ENCODE measurements at regions of chr11 and their contacts with region 1.

Region 1: DNA sequence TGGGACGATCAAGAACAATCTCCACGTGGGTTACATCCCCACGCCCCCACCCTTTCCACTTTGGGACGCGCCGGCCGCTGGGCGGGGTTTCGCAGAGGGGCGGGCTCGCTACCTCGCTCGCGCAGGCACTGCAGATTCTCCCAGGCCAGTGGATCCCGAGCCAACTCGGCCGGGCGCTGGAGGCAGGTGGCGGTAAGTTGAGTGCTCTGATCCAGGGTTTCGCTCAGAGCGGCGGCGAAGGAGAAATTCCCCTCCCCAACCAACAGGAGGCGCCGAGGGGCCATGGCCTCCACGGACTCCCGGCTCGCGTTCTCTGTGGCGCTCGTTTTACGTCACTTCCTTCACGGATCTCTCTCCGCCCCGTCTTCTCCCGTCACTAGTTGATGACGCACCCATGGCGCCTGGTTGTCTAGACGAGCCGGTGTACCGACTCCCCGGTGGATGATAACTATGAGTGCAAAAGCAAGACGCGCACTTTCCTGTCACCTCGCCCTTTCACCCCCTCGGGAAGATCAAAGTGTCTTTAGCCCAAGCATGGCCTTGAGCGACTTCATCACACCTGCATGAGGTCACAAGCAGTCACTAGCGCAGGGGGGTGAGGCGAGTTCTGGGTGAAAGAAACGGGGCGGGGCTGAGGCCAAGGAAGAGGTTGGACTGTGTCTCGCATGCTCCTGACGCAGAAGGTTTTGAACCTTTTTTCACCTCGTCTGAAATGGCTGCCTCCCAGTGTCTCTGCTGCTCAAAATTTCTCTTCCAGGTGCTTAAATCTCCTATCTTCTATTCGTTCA is at the starts of genes CFAP68 and FDXACB1:
- DNase-seq: peak; percentile 96 to 97 (median 97)
- H3K4me3 ChIP-seq: peak within 1 kb of the TSS; percentile 58
- H3K27ac ChIP-seq: peak within 1 kb of the TSS; percentile 65 to 95
- H3K4me1 ChIP-seq: peaks cover 7% of the 10 kb centered on the region
- H3K27me3 ChIP-seq: no peaks in the 10 kb centered on the region
- CTCF ChIP-seq: peak; percentile 79 to 99 (median 99)
- EP300 ChIP-seq: peak; percentile 67
- POLR2A ChIP-seq: peak; percentile 88
- total RNA-seq, gene CFAP68: 11.6 to 40.9 (median 21.4) TPM
- total RNA-seq, gene FDXACB1: 1.3 to 2.9 (median 1.8) TPM

Region 2: GRCh38 chr11:111035746-111036145 is 843.3 kb before region 1 on chr11:
- intact Hi-C with region 1: no loop called
- DNase-seq: no peak
- H3K4me3 ChIP-seq: no peak overlapping the region
- H3K27ac ChIP-seq: no peak overlapping the region
- H3K4me1 ChIP-seq: no peaks in the 10 kb centered on the region
- H3K27me3 ChIP-seq: no peaks in the 10 kb centered on the region
- CTCF ChIP-seq: no peak
- EP300 ChIP-seq: no peak
- POLR2A ChIP-seq: no peak

Region 3: GRCh38 chr11:111911563-111912401 is 32.7 kb after region 1 on chr11 and contains the start of gene CRYAB:
- intact Hi-C with region 1: loop called in 2 of 4 experiments (anchors 5 kb)
- DNase-seq: peak; percentile 82 to 87 (median 86)
- H3K4me3 ChIP-seq: peak within 1 kb of the TSS; percentile 58
- H3K27ac ChIP-seq: peak within 1 kb of the TSS; percentile 90 to 94
- H3K4me1 ChIP-seq: peaks cover 11% of the 10 kb centered on the region
- H3K27me3 ChIP-seq: no peaks in the 10 kb centered on the region
- CTCF ChIP-seq: no peak
- EP300 ChIP-seq: peak; percentile 26
- POLR2A ChIP-seq: peak; percentile 59
- total RNA-seq, gene CRYAB: 22.7 to 121 (median 72.5) TPM

Region 4: GRCh38 chr11:111926505-111927391 is 47.7 kb after region 1 on chr11:
- intact Hi-C with region 1: loop called in 3 of 4 experiments (anchors 5 kb)
- DNase-seq: peak; percentile 96 to 98 (median 97)
- H3K4me3 ChIP-seq: peak overlapping the region; percentile 39
- H3K27ac ChIP-seq: peak overlapping the region; percentile 19 to 79
- H3K4me1 ChIP-seq: peaks cover 10% of the 10 kb centered on the region
- H3K27me3 ChIP-seq: no peaks in the 10 kb centered on the region
- CTCF ChIP-seq: no peak
- EP300 ChIP-seq: no peak
- POLR2A ChIP-seq: peak; percentile 58

Region 5: DNA sequence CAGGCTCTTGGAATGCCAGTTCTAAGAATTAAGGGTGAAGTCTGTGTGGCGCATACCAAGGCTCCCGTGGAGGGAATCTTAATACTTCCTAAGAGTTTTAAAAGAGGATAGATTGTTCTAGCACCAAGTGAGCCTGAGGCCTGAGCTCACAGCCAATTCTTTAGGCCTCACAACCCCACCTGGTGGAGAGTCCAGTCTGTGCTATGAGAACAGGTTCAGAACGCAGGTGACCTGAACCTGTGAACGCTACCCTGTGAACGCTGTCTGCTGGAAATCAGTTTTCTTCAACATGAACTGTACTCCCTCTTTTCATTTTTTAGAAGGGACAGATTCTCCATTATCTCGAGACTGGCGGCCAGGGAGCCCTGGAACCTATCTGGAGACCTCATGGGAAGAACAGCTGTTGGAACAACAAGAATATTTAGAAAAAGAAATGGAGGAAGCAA is 103.0 kb after region 1 on chr11:
- intact Hi-C with region 1: loop called (anchors 2 to 10 kb)
- DNase-seq: peak in 3 of 5 donors; percentile 31 to 52 (median 49)
- H3K4me3 ChIP-seq: no peak overlapping the region
- H3K27ac ChIP-seq: no peak overlapping the region
- H3K4me1 ChIP-seq: no peaks in the 10 kb centered on the region
- H3K27me3 ChIP-seq: no peaks in the 10 kb centered on the region
- CTCF ChIP-seq: peak in 1 of 3 donors; percentile 19
- EP300 ChIP-seq: no peak
- POLR2A ChIP-seq: no peak

Region 6: GRCh38 chr11:112086422-112087191 is 207.6 kb after region 1 on chr11 and contains the starts of genes SDHD and TIMM8B:
- intact Hi-C with region 1: loop called in 1 of 4 experiments (anchors 10 kb)
- DNase-seq: peak; percentile 95 to 96 (median 95)
- H3K4me3 ChIP-seq: peak within 1 kb of the TSS; percentile 71
- H3K27ac ChIP-seq: peak within 1 kb of the TSS; percentile 2 to 23
- H3K4me1 ChIP-seq: peaks cover 10% of the 10 kb centered on the region
- H3K27me3 ChIP-seq: no peaks in the 10 kb centered on the region
- CTCF ChIP-seq: peak in 2 of 3 donors; percentile 32 to 37
- EP300 ChIP-seq: no peak
- POLR2A ChIP-seq: peak; percentile 59
- total RNA-seq, gene SDHD: 64.9 to 85.9 (median 83.2) TPM
- total RNA-seq, gene TIMM8B: 21.8 to 45.7 (median 31.4) TPM